Activated naive CD4-positive, alpha-beta T cell treated with anti-CD3 and anti-CD28 coated beads, Interleukin-2, amount 10 ng/mL, durations not matched to agents 7 days and 5 days (primary cell): ENCODE measurements at regions of chr20 and their contacts with region 1.

Region 1: DNA sequence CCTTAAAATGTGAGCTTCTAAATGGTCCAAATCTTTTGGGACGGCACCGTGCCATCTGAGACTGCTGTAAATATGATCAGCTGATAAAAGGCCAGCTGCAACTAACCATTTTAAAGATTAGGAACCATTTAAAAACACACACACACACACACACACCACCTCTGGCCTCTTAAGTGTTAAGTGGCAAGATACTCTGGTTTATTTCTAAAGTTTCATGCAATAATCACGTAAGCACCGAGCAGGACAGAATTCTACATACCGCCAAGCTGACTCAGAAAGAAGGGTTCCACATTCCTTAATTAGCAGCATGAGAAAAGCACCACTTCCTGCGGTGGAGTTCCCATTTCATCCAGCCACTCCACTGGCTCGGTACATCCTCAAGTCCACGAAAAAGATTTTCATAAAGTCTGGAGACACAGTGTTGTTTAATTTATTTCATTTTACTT is 17.8 kb upstream of the ZNF217 start:
- DNase-seq: no peak
- H3K4me3 Mint-ChIP-seq: no peak overlapping the region
- H3K27ac Mint-ChIP-seq: peak overlapping the region; percentile 60
- H3K4me1 Mint-ChIP-seq: peaks cover 46% of the 10 kb centered on the region
- H3K27me3 Mint-ChIP-seq: no peaks in the 10 kb centered on the region

Region 2: DNA sequence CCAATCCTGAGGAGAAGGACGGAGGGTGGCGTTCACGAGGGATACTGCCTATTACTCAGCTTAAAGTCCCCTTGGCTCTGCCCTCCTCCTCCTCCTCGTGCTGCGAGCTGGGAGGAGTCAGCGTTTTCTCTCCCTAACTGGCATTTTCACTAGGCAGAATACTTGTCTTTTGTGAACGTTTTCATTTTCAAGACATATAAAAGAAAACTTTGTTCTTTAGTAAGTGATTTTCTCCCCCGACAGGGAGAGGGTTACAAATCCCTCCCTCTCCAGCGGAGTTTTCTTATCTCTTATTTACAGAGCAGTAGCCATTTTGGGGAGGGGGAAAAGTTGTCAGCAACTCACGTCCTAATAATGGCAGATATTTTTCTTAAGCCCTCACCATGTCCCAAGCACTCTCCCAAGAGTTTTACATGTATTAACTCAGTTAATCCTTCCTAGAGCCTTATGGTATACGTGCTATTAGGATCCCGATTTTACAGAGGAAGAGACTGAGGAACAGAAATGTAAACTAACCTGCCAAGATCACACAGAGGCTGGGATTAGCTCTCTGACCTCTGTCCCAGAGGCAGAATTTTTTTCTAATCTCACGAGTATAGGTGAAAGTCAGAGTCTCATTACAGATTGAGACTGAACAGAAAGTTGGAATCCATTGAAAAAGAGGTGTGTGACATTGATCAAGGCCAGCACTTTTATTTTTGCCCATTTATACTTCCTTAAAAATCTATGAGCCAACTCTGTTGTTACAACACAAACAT is 12.2 kb after region 1 on chr20:
- CTCF ChIA-PET with region 1: interaction called, 33 read pairs
- DNase-seq: peak; percentile 56
- H3K4me3 Mint-ChIP-seq: peak overlapping the region; percentile 67
- H3K27ac Mint-ChIP-seq: peak overlapping the region; percentile 96
- H3K4me1 Mint-ChIP-seq: peaks cover 52% of the 10 kb centered on the region
- H3K27me3 Mint-ChIP-seq: no peaks in the 10 kb centered on the region

Region 3: GRCh38 chr20:53643031-53643832 is 31.8 kb after region 1 on chr20:
- CTCF ChIA-PET with region 1: no interaction called
- DNase-seq: peak; percentile 81
- H3K4me3 Mint-ChIP-seq: peak overlapping the region; percentile 65
- H3K27ac Mint-ChIP-seq: peak overlapping the region; percentile 95
- H3K4me1 Mint-ChIP-seq: peaks cover 57% of the 10 kb centered on the region
- H3K27me3 Mint-ChIP-seq: no peaks in the 10 kb centered on the region